ENCODE measurements at regions of chr14 and their contacts with region 1.

Region 1: GRCh38 chr14:73741386-73741875 is 27.2 kb upstream of the PNMA1 start:
- DNase-seq: no peak
- H3K4me3 ChIP-seq: peak overlapping the region; percentile 36
- CTCF ChIP-seq: no peak

Region 2: GRCh38 chr14:73553845-73554244 is 187.6 kb before region 1 on chr14:
- CTCF ChIA-PET with region 1: no interaction called
- POLR2A ChIA-PET with region 1: no interaction called
- DNase-seq: no peak
- H3K4me3 ChIP-seq: no peak overlapping the region
- CTCF ChIP-seq: no peak

Region 3: DNA sequence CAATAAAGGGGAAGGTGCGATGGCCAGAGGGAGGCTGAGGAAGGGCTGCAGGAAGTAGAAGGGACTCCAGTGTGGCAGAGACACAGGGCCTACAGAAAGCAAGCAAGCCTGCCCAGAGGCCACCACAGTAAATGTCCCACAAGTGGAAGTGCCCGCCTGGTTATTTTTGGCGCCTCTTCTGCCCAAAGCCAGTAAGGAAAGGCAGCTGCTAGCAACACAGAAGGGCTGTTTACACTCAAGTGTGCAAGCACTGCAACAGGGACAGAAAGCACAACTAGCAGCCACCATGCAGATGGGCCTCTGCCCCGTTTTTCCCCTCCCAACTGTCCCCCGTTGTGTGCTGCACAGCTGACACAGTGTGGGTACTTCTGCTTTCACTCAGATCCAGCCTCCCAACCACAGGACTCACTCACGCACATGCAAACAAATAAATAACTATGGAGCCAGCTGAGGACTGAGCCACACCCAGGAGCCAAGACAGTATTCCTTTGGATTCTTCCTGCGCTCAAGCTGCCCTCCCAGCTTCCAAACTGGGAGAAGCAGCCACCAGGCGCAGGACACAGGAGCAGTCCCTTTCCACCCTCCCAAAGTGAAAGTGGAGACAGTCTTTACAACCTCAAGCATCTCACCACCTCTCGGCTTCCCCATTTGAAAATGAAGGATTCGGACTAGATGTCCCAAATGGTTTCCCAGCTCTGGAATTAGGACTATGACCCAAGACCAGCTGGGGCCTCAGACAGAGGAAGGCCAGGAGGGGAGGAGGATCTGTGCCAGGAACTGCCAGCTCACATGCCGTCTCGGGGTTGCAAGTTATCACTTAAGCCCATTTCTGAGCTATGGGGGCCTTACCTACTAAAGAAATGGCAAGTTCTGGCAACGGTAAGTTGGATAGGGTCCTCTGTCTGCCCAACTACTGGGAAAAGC is 12.8 kb after region 1 on chr14:
- CTCF ChIA-PET with region 1: interaction called, 21 read pairs
- POLR2A ChIA-PET with region 1: interaction called, 4 read pairs
- DNase-seq: no peak
- H3K4me3 ChIP-seq: peak overlapping the region; percentile 38
- CTCF ChIP-seq: no peak

Region 4: DNA sequence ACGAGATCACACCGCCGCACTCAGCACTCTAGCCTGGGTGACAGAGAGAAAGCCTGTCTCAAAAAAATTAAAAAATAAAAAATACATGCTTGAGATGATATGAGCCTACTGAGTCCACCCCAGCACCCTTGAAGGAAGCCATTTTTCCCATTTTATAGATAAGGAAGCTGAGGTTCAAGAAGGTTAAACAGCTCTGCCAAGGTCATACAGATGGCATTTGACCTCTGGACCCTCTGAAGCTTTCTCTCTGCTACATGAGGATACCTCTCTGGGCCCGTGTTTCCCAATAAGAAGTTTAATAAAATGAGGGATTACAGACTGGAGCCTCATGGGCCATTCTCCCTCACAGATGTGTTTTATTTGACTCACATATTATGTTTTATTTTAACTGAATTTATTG is 26.7 kb after region 1 on chr14:
- CTCF ChIA-PET with region 1: no interaction called
- POLR2A ChIA-PET with region 1: no interaction called
- DNase-seq: no peak
- H3K4me3 ChIP-seq: no peak overlapping the region
- CTCF ChIP-seq: no peak